ENCODE measurements at regions of chr5 and their contacts with region 1.

Region 1: GRCh38 chr5:135887351-135887864 is 8.2 kb downstream of the IL9 start:
- DNase-seq: no peak
- H3K4me3 ChIP-seq: no peak overlapping the region
- H3K27ac ChIP-seq: no peak overlapping the region
- H3K4me1 ChIP-seq: peaks cover 0 to 6% (median 0%) of the 10 kb centered on the region in 4 donors
- H3K27me3 ChIP-seq: no peaks in the 10 kb centered on the region
- CTCF ChIP-seq: peak; percentile 39 to 78 (median 66)
- EP300 ChIP-seq: no peak
- POLR2A ChIP-seq: no peak

Region 2: DNA sequence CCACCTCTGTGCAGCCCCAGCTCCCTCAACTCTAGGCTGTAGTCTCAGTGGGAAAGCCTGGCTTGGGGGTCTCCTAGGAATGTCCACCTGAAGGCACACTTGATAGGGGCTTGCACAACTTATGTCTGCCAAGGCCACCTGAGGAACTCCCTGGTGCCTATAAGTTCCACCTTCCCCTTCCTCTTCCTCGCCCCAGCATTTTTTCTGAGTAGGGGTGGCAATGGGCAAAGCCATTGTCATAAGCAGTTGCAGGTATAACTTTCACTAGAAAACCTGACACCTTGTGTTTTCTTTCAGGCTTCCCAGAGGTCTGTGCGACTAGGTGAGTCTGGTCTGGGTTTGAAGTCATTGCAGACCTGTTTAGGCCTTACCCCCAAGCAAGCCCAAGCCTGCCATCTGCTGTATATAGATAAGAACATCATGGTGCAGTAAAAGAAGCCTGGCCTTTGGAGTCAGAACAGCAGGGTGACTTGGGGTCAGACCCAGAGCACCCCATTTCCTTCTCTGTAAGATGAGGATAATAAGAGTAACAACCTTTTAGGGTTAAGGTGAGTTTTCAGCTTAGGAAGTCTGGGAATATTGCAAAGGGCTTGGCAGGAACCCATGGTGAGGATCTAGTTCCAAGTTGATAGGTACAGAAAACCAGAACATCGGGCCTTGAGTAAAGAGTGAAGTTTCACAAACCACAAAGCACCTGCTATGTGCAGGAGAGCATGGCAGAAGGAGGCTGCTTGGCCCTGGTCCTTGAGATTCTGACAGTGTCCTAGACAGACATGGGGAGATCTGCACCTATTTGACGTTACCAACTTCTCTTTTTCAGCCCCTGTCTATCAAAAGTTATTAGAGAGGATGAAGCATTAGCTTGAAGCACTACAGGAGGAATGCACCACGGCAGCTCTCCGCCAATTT is 175.2 kb after region 1 on chr5:
- intact Hi-C with region 1: loop called (anchors 5 kb)
- DNase-seq: no peak
- H3K4me3 ChIP-seq: no peak overlapping the region
- H3K27ac ChIP-seq: peak overlapping the region in 2 of 4 donors; percentile 25 to 80
- H3K4me1 ChIP-seq: peaks cover 3 to 78% (median 54%) of the 10 kb centered on the region in 4 donors
- H3K27me3 ChIP-seq: no peaks in the 10 kb centered on the region
- CTCF ChIP-seq: peak in 3 of 4 experiments; percentile 35 to 45 (median 39)
- EP300 ChIP-seq: no peak
- POLR2A ChIP-seq: no peak

Region 3: GRCh38 chr5:136087961-136088871 is 200.8 kb after region 1 on chr5:
- intact Hi-C with region 1: loop called (anchors 5 kb)
- DNase-seq: peak; percentile 85
- H3K4me3 ChIP-seq: no peak overlapping the region
- H3K27ac ChIP-seq: peak overlapping the region in 3 of 4 donors; percentile 55 to 74 (median 67)
- H3K4me1 ChIP-seq: peaks cover 0 to 52% (median 24%) of the 10 kb centered on the region in 4 donors
- H3K27me3 ChIP-seq: no peaks in the 10 kb centered on the region
- CTCF ChIP-seq: no peak
- EP300 ChIP-seq: peak in 1 of 4 donors; percentile 63
- POLR2A ChIP-seq: no peak

Region 4: DNA sequence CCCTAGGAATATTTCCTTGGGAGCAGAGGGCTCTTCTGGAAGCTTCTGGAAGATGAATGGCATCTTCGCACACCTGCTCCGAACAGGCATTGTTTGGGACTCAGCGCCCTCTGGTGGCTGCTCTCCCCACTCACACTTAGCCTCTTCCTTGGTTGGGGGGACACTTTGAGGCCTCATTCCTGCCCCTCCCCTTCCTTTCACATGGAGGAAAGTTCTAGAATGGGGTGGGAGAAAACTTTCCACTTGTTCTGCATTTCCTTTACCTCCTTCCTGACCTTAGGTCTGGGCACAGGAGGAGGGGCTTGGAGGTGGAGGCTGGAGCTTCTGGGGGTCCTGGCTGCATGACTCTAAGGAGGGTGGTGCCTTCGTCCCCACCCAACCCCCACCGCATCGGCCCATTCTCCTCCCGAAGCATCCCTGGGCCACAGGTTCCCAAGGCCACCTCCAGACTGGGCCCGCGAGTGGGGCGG is 324.9 kb after region 1 on chr5:
- intact Hi-C with region 1: loop called (anchors 1 kb)
- DNase-seq: peak; percentile 76
- H3K4me3 ChIP-seq: no peak overlapping the region
- H3K27ac ChIP-seq: no peak overlapping the region
- H3K4me1 ChIP-seq: no peaks in the 10 kb centered on the region
- H3K27me3 ChIP-seq: peaks cover 0 to 12% (median 7%) of the 10 kb centered on the region in 3 donors
- CTCF ChIP-seq: peak; percentile 62 to 89 (median 80)
- EP300 ChIP-seq: no peak
- POLR2A ChIP-seq: no peak

Measured in sigmoid colon (tissue), 7 donors.